ENCODE measurements at regions of chr10 and their contacts with region 1.

Region 1: GRCh38 chr10:43396928-43397624 is 11.9 kb downstream of the HNRNPF start:
- DNase-seq: peak; percentile 95
- H3K4me3 ChIP-seq: peak overlapping the region; percentile 62 to 86 (median 69)
- H3K27ac ChIP-seq: peak overlapping the region; percentile 98 to 100 (median 99)
- H3K4me1 ChIP-seq: peaks cover 33 to 73% (median 50%) of the 10 kb centered on the region in 4 donors
- H3K27me3 ChIP-seq: no peaks in the 10 kb centered on the region
- CTCF ChIP-seq: no peak
- EP300 ChIP-seq: peak; percentile 23
- POLR2A ChIP-seq: peak; percentile 83

Region 2: GRCh38 chr10:42304341-42304740 is 1092.7 kb before region 1 on chr10:
- in situ Hi-C with region 1: no loop called
- intact Hi-C with region 1: no loop called
- DNase-seq: no peak
- H3K4me3 ChIP-seq: no peak overlapping the region
- H3K27ac ChIP-seq: no peak overlapping the region
- H3K4me1 ChIP-seq: no peaks in the 10 kb centered on the region
- H3K27me3 ChIP-seq: no peaks in the 10 kb centered on the region
- CTCF ChIP-seq: no peak
- EP300 ChIP-seq: no peak
- POLR2A ChIP-seq: no peak

Region 3: GRCh38 chr10:43287056-43288007 is 109.7 kb before region 1 on chr10:
- in situ Hi-C with region 1: no loop called
- intact Hi-C with region 1: no loop called
- DNase-seq: peak; percentile 65
- H3K4me3 ChIP-seq: no peak overlapping the region
- H3K27ac ChIP-seq: peak overlapping the region in 2 of 4 donors; percentile 8 to 42
- H3K4me1 ChIP-seq: peaks cover 0 to 11% (median 2%) of the 10 kb centered on the region in 4 donors
- H3K27me3 ChIP-seq: peaks cover 17% of the 10 kb centered on the region
- CTCF ChIP-seq: no peak
- EP300 ChIP-seq: no peak
- POLR2A ChIP-seq: no peak

Region 4: DNA sequence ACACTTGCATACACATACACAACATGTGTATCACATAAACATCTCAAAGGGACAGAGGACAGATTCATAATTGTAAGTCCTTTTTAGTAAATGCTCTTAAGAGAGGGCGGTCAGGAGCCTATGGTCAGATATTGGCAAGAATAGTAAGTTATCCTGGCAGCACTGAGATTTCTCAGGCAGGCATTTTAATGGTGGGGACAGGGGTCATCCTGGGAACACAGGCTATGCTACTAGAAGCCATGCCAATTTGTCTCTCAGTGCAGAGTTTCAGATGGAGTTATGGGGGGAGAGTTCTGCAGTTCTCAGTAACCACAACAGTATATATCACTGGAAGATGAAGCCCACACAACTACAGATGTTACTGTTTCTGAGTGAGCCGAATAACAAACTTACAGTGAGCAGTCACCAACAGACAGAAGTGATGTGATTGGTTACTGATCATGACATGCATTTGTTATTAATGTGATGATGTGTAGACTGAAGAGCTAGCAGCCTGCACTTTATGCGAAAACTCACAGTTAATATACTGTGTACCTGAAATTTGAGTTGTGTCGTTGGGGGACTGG is 56.3 kb after region 1 on chr10:
- in situ Hi-C with region 1: loop called in 1 of 4 experiments (anchors 5 kb)
- intact Hi-C with region 1: no loop called
- DNase-seq: no peak
- H3K4me3 ChIP-seq: no peak overlapping the region
- H3K27ac ChIP-seq: peak overlapping the region in 2 of 4 donors; percentile 57 to 95
- H3K4me1 ChIP-seq: peaks cover 11 to 30% (median 14%) of the 10 kb centered on the region in 4 donors
- H3K27me3 ChIP-seq: no peaks in the 10 kb centered on the region
- CTCF ChIP-seq: no peak
- EP300 ChIP-seq: no peak
- POLR2A ChIP-seq: no peak